Heart left ventricle (tissue), 16 donors: ENCODE measurements at regions of chr13 and their contacts with region 1.

Region 1: GRCh38 chr13:46544208-46544607 is 8.8 kb upstream of the LRCH1 start:
- DNase-seq: no peak
- ATAC-seq: no peak
- H3K4me3 ChIP-seq: no peak overlapping the region
- H3K27ac ChIP-seq: no peak overlapping the region
- H3K4me1 ChIP-seq: no peaks in the 10 kb centered on the region
- H3K27me3 ChIP-seq: no peaks in the 10 kb centered on the region
- CTCF ChIP-seq: no peak
- POLR2A ChIP-seq: no peak

Region 2: GRCh38 chr13:46492946-46493345 is 51.3 kb before region 1 on chr13:
- intact Hi-C with region 1: loop called in 4 of 10 experiments (anchors 5 to 10 kb)
- DNase-seq: peak in 1 of 5 donors; percentile 12
- ATAC-seq: peak in 2 of 4 donors; percentile 45 to 59
- H3K4me3 ChIP-seq: no peak overlapping the region
- H3K27ac ChIP-seq: no peak overlapping the region
- H3K4me1 ChIP-seq: peaks cover 0 to 12% (median 0%) of the 10 kb centered on the region in 12 donors
- H3K27me3 ChIP-seq: peaks cover 0 to 1% (median 0%) of the 10 kb centered on the region in 9 donors
- CTCF ChIP-seq: peak; percentile 46 to 82 (median 67)
- POLR2A ChIP-seq: no peak

Region 3: DNA sequence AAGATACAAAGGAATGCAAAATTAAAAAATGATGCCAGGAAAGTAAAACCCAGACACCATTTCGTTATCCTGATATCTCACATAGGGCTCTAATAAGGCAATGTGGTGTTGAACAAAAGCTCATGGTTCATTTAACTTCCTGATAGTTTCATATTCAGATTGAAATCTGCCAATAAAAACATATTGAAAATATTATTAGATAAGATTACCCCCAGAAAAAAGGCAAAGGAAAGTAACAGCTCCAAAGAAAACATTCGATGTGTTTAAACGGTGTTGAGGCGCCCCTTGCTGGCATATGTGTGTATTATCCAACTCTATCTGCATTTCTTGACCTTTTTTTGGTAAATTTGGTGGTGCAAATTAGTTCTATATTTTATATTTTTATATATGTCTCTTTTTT is 176.8 kb after region 1 on chr13:
- intact Hi-C with region 1: loop called in 1 of 10 experiments (anchors 5 kb)
- DNase-seq: peak in 4 of 5 donors; percentile 32 to 45 (median 36)
- ATAC-seq: peak in 3 of 4 donors; percentile 39 to 68 (median 68)
- H3K4me3 ChIP-seq: no peak overlapping the region
- H3K27ac ChIP-seq: no peak overlapping the region
- H3K4me1 ChIP-seq: peaks cover 0 to 7% (median 2%) of the 10 kb centered on the region in 12 donors
- H3K27me3 ChIP-seq: no peaks in the 10 kb centered on the region
- CTCF ChIP-seq: peak; percentile 48 to 83 (median 71)
- POLR2A ChIP-seq: no peak